Activated CD4-positive, alpha-beta T cell treated with anti-CD3 and anti-CD28 coated beads for 36 hours (primary cell): ENCODE measurements at regions of chr1 and their contacts with region 1.

Region 1: GRCh38 chr1:25037174-25038074 is 107.3 kb upstream of the RUNX3 start:
- DNase-seq: peak; percentile 86
- ATAC-seq: peak; percentile 55
- H3K4me3 Mint-ChIP-seq: no peak overlapping the region
- H3K27ac Mint-ChIP-seq: peak overlapping the region; percentile 27
- H3K4me1 Mint-ChIP-seq: peaks cover 35% of the 10 kb centered on the region
- H3K27me3 Mint-ChIP-seq: no peaks in the 10 kb centered on the region

Region 2: DNA sequence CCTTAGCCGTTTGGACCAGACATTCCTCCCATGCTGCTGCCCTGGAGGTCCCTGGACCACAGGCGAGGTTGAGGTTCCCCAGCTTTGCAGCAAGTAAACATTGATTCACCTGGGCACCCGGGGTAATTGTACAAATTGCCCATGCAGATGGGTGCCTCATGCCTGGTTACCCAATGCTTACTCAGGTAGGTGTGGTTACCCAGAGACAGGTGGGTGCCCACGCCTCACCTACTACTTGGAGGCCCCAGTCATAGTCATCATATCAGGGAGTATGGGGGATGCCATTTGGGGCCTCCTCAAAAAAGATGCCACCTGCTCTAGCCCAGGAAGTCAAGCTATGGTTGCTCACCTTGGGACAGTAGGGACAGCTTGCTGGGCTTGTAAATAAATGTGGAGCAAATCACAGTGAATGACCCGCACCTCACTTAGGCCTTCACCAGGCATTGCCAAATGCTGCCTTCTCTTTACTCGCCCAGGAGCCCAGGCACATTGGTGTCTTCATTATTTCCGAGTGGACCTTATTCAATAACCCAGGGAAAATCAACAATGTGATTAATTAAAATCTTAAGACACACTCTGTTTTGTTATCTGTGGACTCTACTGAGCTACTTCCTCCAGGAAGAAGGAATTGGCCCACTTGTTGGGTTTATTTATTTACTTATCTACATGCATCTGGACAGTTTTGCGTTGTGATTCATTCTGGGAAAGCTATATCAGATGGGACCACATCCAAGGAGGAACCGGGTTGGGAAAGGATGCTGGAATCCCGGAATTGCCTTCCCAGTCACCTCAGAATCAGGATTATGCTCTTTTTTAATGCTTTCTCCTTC is 753.9 kb before region 1 on chr1:
- CTCF ChIA-PET with region 1: no interaction called
- POLR2A ChIA-PET with region 1: no interaction called
- intact Hi-C with region 1: no loop called
- DNase-seq: no peak
- ATAC-seq: no peak
- H3K4me3 Mint-ChIP-seq: no peak overlapping the region
- H3K27ac Mint-ChIP-seq: no peak overlapping the region
- H3K4me1 Mint-ChIP-seq: no peaks in the 10 kb centered on the region
- H3K27me3 Mint-ChIP-seq: peaks cover 2% of the 10 kb centered on the region

Region 3: DNA sequence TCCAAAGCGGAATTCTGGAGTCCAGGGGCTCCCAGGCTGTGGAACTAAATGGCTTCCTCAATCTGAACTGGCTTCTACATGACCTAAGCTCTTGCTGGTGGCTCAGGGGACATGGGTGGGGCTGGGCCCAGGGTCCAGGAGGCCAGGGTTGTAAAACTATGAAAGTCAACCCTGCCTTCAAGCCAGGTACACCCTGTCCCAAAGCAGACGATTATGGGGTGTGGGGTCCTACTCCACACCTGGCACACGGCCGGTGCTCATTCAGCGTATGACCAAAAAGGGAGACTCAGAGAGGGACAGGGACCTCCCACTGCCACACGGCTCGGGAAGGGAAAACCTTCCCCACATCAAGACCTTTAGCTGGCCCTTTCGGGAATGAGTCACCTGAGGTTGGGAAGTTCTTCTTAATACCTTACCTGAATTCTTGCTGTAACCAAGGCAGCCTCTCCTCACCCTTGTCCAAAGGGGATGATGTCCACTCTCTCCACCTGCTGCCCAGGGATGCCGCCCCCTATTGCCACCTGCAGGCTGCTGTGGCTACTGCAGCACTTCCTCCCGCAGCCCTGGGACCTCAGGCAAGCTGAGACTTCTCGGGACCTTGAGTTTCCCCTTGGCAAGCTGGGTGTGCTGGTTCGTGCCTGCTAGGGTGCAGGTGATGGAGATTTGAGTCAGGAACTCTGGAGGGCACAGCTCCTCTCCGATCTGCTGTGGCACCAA is 139.5 kb before region 1 on chr1:
- CTCF ChIA-PET with region 1: no interaction called
- POLR2A ChIA-PET with region 1: no interaction called
- intact Hi-C with region 1: no loop called
- DNase-seq: peak; percentile 79
- ATAC-seq: peak; percentile 45
- H3K4me3 Mint-ChIP-seq: peak overlapping the region; percentile 43
- H3K27ac Mint-ChIP-seq: no peak overlapping the region
- H3K4me1 Mint-ChIP-seq: peaks cover 17% of the 10 kb centered on the region
- H3K27me3 Mint-ChIP-seq: no peaks in the 10 kb centered on the region

Region 4: DNA sequence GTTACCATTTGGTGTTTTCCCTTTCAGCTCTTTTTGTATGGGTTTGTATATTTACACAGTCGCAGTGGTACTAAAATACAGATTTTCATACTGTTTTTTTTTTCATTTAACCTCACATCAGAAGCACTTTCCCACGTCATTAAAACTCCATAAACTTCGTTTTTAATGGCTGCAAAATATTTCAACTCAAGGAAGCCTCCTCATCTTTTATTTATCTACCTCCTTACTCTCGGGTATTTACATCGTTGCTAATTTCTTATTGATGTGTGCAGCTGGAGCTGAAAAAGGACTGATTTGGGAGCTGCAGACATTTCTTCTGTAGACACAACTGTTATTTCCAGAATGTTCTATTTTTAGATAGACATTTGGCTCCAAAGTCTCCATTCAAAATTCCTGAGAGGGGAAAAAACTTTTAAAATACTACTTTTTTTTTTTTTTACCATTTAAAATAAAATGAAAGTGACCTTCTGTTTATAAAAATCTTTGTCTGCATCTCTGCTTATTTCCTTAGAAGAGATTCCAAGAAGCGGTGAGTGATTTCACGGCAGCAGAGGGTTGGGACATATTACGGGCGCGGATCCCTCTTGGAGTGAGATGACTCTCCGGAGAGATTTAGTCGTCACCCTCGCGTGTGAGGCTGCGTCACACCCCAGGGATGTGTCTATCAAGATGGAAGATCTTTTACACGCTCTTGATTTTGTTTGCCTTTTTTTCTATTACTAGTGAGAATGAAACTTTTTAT is 117.5 kb before region 1 on chr1:
- CTCF ChIA-PET with region 1: interaction called, 109 read pairs
- POLR2A ChIA-PET with region 1: no interaction called
- intact Hi-C with region 1: no loop called
- DNase-seq: peak; percentile 90
- ATAC-seq: peak; percentile 38
- H3K4me3 Mint-ChIP-seq: peak overlapping the region; percentile 54
- H3K27ac Mint-ChIP-seq: peak overlapping the region; percentile 97
- H3K4me1 Mint-ChIP-seq: peaks cover 69% of the 10 kb centered on the region
- H3K27me3 Mint-ChIP-seq: no peaks in the 10 kb centered on the region

Region 5: DNA sequence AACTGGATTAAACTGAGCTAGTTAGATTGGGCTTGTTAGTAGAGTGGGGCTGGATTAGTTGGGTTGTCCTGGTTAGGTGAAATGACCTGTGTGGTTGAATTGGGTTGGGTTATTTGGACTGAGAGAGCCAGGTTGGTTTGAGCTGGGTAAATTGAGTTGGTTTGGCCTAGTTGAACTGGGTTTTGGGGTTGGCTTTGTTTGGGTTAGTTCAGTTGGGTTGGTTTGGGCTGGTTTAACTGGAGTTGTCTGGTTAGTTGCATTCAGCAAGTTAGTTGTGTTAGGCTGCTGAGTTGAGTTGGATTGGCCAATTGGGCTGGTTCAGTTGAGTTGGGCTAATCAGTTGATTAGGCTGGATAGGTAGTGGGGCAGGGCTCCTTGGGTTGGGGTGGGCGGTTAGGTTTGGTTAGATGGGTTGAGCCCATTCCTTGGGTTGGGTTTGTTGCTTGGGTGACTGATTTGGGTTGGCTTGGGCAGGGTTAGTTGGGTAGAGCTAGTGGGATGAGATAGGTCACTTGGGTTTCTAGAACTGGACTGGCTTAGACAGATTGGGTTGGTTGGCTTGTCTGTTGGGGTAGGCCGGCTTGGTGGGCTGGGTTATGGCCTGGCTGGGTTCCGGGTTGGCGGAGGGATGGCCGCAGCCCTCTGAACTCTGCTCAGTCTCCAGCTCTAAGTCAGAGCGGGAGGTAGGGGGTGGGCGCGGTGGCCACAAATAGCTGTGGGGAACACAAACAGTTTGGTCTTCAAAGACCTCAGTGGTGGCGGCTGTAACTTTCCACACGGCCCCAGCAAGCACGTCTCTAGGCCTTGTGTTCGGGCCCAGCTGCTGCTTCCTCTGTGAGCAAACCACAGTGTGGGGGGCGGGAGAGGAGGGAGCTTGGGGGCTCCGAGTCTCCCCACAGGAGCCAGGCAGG is 40.2 kb before region 1 on chr1:
- CTCF ChIA-PET with region 1: interaction called, 16 read pairs
- POLR2A ChIA-PET with region 1: no interaction called
- intact Hi-C with region 1: no loop called
- DNase-seq: no peak
- ATAC-seq: no peak
- H3K4me3 Mint-ChIP-seq: no peak overlapping the region
- H3K27ac Mint-ChIP-seq: peak overlapping the region; percentile 72
- H3K4me1 Mint-ChIP-seq: peaks cover 65% of the 10 kb centered on the region
- H3K27me3 Mint-ChIP-seq: no peaks in the 10 kb centered on the region